Activated CD4-positive, alpha-beta T cell treated with anti-CD3 and anti-CD28 coated beads, Interleukin-2, amount 10 ng/mL, durations not matched to agents 7 days and 5 days (primary cell): ENCODE measurements at regions of chr20 and their contacts with region 1.

Region 1: DNA sequence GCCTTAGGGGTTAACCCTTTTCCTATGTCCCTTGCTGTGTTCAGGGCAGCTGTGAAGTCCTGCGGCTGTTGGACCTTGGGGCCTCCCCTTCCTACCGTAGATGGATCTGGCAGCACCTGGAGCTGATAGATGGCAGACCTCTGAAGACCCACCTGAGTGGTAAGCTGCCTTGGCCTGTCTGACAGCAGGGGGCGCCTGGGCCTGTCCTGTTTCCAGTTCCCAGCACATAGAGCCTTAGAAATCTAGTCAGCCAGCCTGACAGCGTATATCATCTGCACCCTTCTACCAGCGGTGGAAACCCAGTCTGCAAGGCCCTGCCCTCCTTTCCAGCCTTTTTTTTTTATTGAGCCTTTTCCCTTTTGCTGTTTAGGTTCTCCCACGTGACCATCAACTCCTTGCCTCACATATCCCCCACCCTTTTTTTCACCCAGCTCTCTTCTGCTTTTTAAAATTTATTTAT is 26.6 kb downstream of the CNBD2 start:
- DNase-seq: peak; percentile 86
- H3K4me3 Mint-ChIP-seq: no peak overlapping the region
- H3K27ac Mint-ChIP-seq: no peak overlapping the region
- H3K4me1 Mint-ChIP-seq: peaks cover 4% of the 10 kb centered on the region
- H3K27me3 Mint-ChIP-seq: peaks cover 5% of the 10 kb centered on the region

Region 2: GRCh38 chr20:35743693-35744491 is 251.1 kb before region 1 on chr20:
- CTCF ChIA-PET with region 1: no interaction called
- POLR2A ChIA-PET with region 1: no interaction called
- DNase-seq: no peak
- H3K4me3 Mint-ChIP-seq: peak overlapping the region; percentile 91
- H3K27ac Mint-ChIP-seq: peak overlapping the region; percentile 100
- H3K4me1 Mint-ChIP-seq: peaks cover 29% of the 10 kb centered on the region
- H3K27me3 Mint-ChIP-seq: no peaks in the 10 kb centered on the region

Region 3: GRCh38 chr20:35816339-35816738 is 178.7 kb before region 1 on chr20:
- CTCF ChIA-PET with region 1: no interaction called
- POLR2A ChIA-PET with region 1: no interaction called
- DNase-seq: no peak
- H3K4me3 Mint-ChIP-seq: no peak overlapping the region
- H3K27ac Mint-ChIP-seq: no peak overlapping the region
- H3K4me1 Mint-ChIP-seq: peaks cover 16% of the 10 kb centered on the region
- H3K27me3 Mint-ChIP-seq: no peaks in the 10 kb centered on the region

Region 4: GRCh38 chr20:35963878-35964277 is 31.1 kb before region 1 on chr20:
- CTCF ChIA-PET with region 1: no interaction called
- POLR2A ChIA-PET with region 1: no interaction called
- DNase-seq: no peak
- H3K4me3 Mint-ChIP-seq: no peak overlapping the region
- H3K27ac Mint-ChIP-seq: no peak overlapping the region
- H3K4me1 Mint-ChIP-seq: peaks cover 4% of the 10 kb centered on the region
- H3K27me3 Mint-ChIP-seq: peaks cover 2% of the 10 kb centered on the region

Region 5: GRCh38 chr20:35978041-35978513 is 16.9 kb before region 1 on chr20:
- CTCF ChIA-PET with region 1: interaction called, 17 read pairs
- POLR2A ChIA-PET with region 1: interaction called, 3 read pairs
- DNase-seq: no peak
- H3K4me3 Mint-ChIP-seq: no peak overlapping the region
- H3K27ac Mint-ChIP-seq: no peak overlapping the region
- H3K4me1 Mint-ChIP-seq: no peaks in the 10 kb centered on the region
- H3K27me3 Mint-ChIP-seq: no peaks in the 10 kb centered on the region

Region 6: DNA sequence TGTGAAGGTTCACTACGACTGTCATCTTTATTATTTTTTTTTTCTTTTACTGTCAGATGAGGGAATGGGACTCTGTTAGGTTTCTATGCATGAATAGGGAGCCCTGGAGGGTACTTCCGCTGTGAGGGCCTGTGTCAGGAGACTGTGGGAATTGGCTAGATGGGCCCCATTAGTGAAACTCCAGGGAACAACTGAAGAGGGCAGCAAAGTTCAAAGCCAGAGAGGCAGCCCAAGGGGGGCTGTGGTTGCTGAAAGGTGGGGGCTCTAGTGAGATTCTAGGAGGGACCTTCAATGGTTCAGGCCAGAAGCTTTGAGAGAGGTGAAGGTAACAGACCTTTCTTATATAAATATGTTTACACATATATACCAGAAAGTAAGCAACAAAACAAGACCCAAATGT is 146.3 kb after region 1 on chr20:
- CTCF ChIA-PET with region 1: interaction called, 32 read pairs
- POLR2A ChIA-PET with region 1: interaction called, 4 read pairs
- DNase-seq: no peak
- H3K4me3 Mint-ChIP-seq: no peak overlapping the region
- H3K27ac Mint-ChIP-seq: no peak overlapping the region
- H3K4me1 Mint-ChIP-seq: peaks cover 9% of the 10 kb centered on the region
- H3K27me3 Mint-ChIP-seq: peaks cover 11% of the 10 kb centered on the region

Region 7: DNA sequence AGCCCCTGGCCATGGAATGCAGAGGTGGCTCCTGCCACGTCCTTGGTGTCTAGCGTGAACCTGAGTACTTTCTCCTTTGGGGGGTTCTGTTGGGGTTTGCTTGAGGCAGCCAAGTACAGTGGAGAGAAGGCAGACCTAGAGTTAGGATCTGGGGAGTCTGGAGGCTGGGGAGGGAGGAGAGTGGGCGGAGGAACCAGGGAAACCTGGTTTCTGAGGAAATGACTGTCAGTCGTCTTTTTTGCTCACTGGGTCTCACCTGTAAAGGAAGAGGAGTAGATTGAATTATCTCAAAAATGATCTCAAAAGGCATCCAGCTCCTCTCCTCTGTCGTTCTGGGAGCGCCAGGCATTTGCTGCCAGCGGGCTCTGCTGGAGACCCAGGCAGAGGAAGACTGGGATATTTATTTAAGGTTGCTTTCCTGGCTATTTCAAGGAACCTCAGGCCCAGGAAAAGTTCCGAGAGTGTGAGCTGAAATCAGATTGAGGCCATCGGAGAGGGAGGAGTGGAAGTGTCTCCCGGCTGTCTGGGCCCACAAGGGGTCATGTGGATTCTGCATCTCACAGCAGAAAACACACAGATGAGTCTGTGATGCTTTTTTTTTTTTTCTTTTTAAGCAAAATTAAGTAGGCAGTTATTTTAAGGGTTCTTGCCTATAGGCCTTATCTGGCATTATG is 175.7 kb after region 1 on chr20:
- CTCF ChIA-PET with region 1: no interaction called
- POLR2A ChIA-PET with region 1: no interaction called
- DNase-seq: no peak
- H3K4me3 Mint-ChIP-seq: no peak overlapping the region
- H3K27ac Mint-ChIP-seq: no peak overlapping the region
- H3K4me1 Mint-ChIP-seq: peaks cover 8% of the 10 kb centered on the region
- H3K27me3 Mint-ChIP-seq: no peaks in the 10 kb centered on the region